ENCODE measurements at regions of chr6 and their contacts with region 1.

Region 1: DNA sequence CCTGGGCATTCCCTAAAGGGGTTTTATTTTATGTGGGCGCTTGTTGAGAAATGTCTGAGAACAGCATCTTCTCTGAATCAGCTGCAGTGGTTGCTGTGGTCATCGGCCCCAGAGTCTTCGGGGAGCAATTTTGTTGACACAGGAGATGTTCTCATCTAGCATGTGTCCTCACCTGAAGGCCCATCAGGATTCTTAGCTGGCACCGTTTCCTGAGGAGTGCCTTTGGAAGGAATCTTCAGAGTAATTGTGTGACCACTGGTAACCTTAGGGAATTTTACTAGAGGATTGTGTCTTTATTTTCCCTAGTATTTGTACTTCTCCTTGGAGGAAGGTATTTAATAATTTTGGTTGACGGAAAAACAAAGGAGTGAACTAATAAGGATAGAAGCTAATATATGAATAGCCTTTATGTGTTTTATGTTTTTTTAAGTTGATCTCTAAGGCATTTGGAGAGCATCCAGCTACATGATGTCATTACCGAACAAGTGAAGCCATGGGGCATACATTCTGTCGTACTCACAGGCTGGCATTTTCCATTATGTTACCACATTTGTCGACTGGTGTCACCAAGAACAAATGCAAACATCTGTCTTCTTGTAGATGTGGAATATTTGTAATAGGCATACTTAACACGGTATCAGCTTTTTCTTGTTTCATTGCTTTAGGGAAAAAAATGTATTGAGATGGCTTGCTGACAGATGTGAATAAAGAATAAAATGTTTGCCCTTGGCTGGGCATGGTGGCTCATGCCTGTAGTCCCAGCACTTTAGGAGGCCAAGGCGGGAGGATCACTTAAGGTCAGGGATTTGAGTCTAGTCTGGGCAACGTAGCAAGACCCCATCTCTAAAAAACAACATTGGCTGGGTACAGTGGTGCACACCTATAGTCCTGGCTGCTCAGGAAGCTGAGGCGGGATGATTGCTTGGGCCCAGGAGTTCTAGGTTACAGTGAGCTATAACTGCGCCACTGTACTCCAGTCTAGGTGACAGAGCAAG is 41.9 kb downstream of the TULP4 start:
- DNase-seq: no peak
- H3K4me3 ChIP-seq: no peak overlapping the region
- H3K27ac ChIP-seq: no peak overlapping the region
- H3K4me1 ChIP-seq: no peaks in the 10 kb centered on the region
- CTCF ChIP-seq: no peak

Region 2: DNA sequence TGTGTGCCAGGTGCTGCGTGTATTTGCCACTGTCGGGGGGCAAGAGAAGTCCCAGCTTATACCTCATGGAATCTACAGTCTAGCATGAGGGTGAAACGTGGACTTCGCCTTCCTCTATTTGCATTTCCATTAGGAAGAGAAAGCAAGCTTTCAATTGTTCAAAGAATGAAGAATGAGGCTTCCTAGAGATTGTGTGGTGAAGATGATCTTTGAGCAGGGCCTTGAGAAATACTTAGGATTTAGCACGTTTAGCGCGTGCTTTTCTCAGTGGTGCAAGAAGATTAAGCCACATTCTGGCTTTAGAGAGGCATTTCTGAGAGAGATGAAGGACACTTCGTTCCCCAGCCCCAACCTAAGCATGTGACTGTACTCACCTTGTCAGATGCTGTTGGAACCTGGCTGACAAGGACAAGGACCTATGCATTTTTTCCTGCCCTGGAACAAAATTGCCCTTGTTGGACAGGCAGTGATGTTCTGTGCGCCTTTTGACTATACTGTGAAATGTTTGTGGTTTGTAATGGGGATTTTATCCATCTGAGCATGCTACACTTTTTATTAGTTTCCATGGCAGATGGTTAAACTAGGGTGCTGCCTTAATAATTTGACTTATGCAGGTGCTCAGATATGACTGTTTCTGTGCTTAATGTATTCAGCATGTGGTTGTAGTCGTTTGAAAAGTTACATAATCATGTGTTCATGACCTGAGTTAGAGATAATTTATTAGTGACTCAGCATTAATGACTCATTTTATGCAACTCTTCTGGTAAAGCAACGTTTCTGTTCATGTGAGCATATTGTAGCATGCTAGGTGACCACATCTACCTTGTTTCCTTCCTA is 31.2 kb before region 1 on chr6:
- CTCF ChIA-PET with region 1: no interaction called
- POLR2A ChIA-PET with region 1: no interaction called
- intact Hi-C with region 1: no loop called
- DNase-seq: no peak
- H3K4me3 ChIP-seq: no peak overlapping the region
- H3K27ac ChIP-seq: no peak overlapping the region
- H3K4me1 ChIP-seq: peaks cover 23% of the 10 kb centered on the region
- CTCF ChIP-seq: no peak

Region 3: DNA sequence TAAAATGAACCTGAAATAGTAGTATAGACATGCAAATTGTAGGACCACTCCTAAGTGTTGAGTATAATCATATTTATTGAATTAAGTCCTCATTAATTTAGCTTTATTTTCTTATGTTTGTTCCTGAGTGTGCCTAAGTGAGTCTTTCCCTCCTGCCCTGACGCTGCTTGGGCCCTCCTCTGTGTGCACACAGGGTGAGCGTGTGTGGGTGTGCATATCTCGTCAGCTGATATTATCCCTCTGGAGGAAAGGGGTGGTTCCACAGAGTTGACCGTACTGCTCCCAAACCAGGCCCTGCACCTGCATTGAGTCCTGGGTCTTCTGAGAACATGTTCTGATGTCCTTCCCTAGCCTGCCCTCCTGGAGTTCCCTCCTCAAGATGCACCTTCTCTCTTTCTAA is 13.9 kb before region 1 on chr6:
- CTCF ChIA-PET with region 1: interaction called, 3 read pairs
- POLR2A ChIA-PET with region 1: interaction called, 10 read pairs
- intact Hi-C with region 1: no loop called
- DNase-seq: no peak
- H3K4me3 ChIP-seq: no peak overlapping the region
- H3K27ac ChIP-seq: no peak overlapping the region
- H3K4me1 ChIP-seq: no peaks in the 10 kb centered on the region
- CTCF ChIP-seq: no peak

Measured in OCI-LY7 (cell line).